ENCODE measurements at regions of chr19 and their contacts with region 1.

Region 1: GRCh38 chr19:917323-918151 is at the start of gene KISS1R:
- DNase-seq: no peak
- H3K4me3 ChIP-seq: peak within 1 kb of the TSS in 1 of 3 donors; percentile 10
- H3K27ac ChIP-seq: no peak within 1 kb of the TSS
- H3K4me1 ChIP-seq: peaks cover 27 to 42% of the 10 kb centered on the region in 2 donors
- H3K27me3 ChIP-seq: peaks cover 30% of the 10 kb centered on the region
- CTCF ChIP-seq: peak in 2 of 6 experiments; percentile 32 to 33
- POLR2A ChIP-seq: no peak
- total RNA-seq, gene KISS1R: not detected

Region 2: GRCh38 chr19:771332-771785 is 146.2 kb before region 1 on chr19:
- intact Hi-C with region 1: loop called (anchors 5 kb)
- DNase-seq: peak in 1 of 2 donors; percentile 39
- H3K4me3 ChIP-seq: no peak overlapping the region
- H3K27ac ChIP-seq: no peak overlapping the region
- H3K4me1 ChIP-seq: peaks cover 9 to 21% of the 10 kb centered on the region in 2 donors
- H3K27me3 ChIP-seq: no peaks in the 10 kb centered on the region
- CTCF ChIP-seq: peak in 1 of 6 experiments; percentile 51
- POLR2A ChIP-seq: no peak

Region 3: GRCh38 chr19:860481-861101 is 56.9 kb before region 1 on chr19:
- intact Hi-C with region 1: loop called (anchors 5 kb)
- DNase-seq: peak; percentile 68 to 70
- H3K4me3 ChIP-seq: peak overlapping the region in 1 of 3 donors; percentile 34
- H3K27ac ChIP-seq: peak overlapping the region in 1 of 3 donors; percentile 53
- H3K4me1 ChIP-seq: peaks cover 4 to 6% of the 10 kb centered on the region in 2 donors
- H3K27me3 ChIP-seq: no peaks in the 10 kb centered on the region
- CTCF ChIP-seq: peak in 2 of 6 experiments; percentile 28 to 29
- POLR2A ChIP-seq: peak in 1 of 2 donors; percentile 40

Region 4: GRCh38 chr19:900302-901111 is 17.0 kb before region 1 on chr19:
- intact Hi-C with region 1: no loop called
- DNase-seq: no peak
- H3K4me3 ChIP-seq: no peak overlapping the region
- H3K27ac ChIP-seq: no peak overlapping the region
- H3K4me1 ChIP-seq: peaks cover 0 to 15% of the 10 kb centered on the region in 2 donors
- H3K27me3 ChIP-seq: no peaks in the 10 kb centered on the region
- CTCF ChIP-seq: no peak
- POLR2A ChIP-seq: no peak